Naive thymus-derived CD4-positive, alpha-beta T cell (primary cell): ENCODE measurements at regions of chr11 and their contacts with region 1.

Region 1: GRCh38 chr11:34936945-34937629 is 20.7 kb downstream of the PDHX start:
- DNase-seq: no peak
- ATAC-seq: no peak
- H3K4me3 ChIP-seq: no peak overlapping the region
- H3K4me3 Mint-ChIP-seq: peak overlapping the region in 2 of 10 donors; percentile 5 to 38
- H3K27ac ChIP-seq: no peak overlapping the region
- H3K27ac Mint-ChIP-seq: peak overlapping the region in 4 of 9 donors; percentile 5 to 65 (median 34)
- H3K4me1 ChIP-seq: peaks cover 5 to 6% of the 10 kb centered on the region in 2 donors
- H3K4me1 Mint-ChIP-seq: peaks cover 16 to 40% (median 30%) of the 10 kb centered on the region in 7 donors
- H3K27me3 ChIP-seq: no peaks in the 10 kb centered on the region
- H3K27me3 Mint-ChIP-seq: no peaks in the 10 kb centered on the region

Region 2: GRCh38 chr11:34977089-34977906 is 40.2 kb after region 1 on chr11:
- CTCF ChIA-PET with region 1: no interaction called
- POLR2A ChIA-PET with region 1: no interaction called
- intact Hi-C with region 1: loop called in 1 of 2 experiments (anchors 5 kb)
- DNase-seq: no peak
- ATAC-seq: no peak
- H3K4me3 ChIP-seq: no peak overlapping the region
- H3K4me3 Mint-ChIP-seq: no peak overlapping the region
- H3K27ac ChIP-seq: no peak overlapping the region
- H3K27ac Mint-ChIP-seq: peak overlapping the region in 1 of 9 donors; percentile 1
- H3K4me1 ChIP-seq: no peaks in the 10 kb centered on the region
- H3K4me1 Mint-ChIP-seq: peaks cover 17 to 46% (median 30%) of the 10 kb centered on the region in 7 donors
- H3K27me3 ChIP-seq: no peaks in the 10 kb centered on the region
- H3K27me3 Mint-ChIP-seq: no peaks in the 10 kb centered on the region